Motor neuron (in vitro differentiated cells): ENCODE measurements at regions of chr9 and their contacts with region 1.

Region 1: GRCh38 chr9:15211160-15211814 is 95.7 kb downstream of the TTC39B start:
- ATAC-seq: peak in 6 of 8 experiments; percentile 37 to 76 (median 62)
- H3K4me3 ChIP-seq: no peak overlapping the region
- H3K27ac ChIP-seq: no peak overlapping the region
- H3K4me1 ChIP-seq: peaks cover 13 to 17% of the 10 kb centered on the region in 2 donors

Region 2: GRCh38 chr9:15328946-15329345 is 117.7 kb after region 1 on chr9:
- in situ Hi-C with region 1: no loop called
- ATAC-seq: no peak
- H3K4me3 ChIP-seq: no peak overlapping the region
- H3K27ac ChIP-seq: no peak overlapping the region
- H3K4me1 ChIP-seq: no peaks in the 10 kb centered on the region

Region 3: DNA sequence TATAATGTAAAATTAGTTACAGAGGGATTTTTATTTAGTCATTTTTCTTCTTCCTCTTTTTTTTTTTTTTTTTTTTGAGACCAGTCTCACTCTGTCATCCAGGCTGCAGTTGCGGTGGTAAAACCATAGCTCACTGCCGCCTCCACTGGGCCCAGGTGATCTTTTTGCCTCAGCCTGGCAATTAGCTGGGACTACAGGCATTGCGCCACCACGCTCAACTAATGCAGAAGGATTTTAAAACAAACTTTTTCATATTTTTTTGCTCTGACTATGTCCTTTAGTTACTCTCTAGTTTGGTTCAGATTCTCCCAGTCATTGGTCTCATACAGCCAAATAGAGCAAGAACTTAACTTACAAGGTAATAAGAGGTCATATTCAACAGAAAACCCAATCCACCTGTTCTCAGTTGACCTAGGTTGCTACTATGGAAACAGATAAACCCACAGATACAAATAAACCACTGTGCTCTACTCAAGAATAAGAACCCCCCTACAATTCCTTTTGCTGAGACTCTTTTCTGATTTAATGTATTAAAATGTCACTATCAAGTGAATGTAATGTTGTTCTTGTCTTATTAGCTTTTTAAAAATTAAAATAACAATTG is 145.9 kb after region 1 on chr9:
- in situ Hi-C with region 1: no loop called
- ATAC-seq: no peak
- H3K4me3 ChIP-seq: no peak overlapping the region
- H3K27ac ChIP-seq: no peak overlapping the region
- H3K4me1 ChIP-seq: peaks cover 0 to 5% of the 10 kb centered on the region in 2 donors

Region 4: GRCh38 chr9:15606643-15607472 is 395.6 kb after region 1 on chr9:
- in situ Hi-C with region 1: loop called in 2 of 9 experiments (anchors 25 kb)
- ATAC-seq: no peak
- H3K4me3 ChIP-seq: no peak overlapping the region
- H3K27ac ChIP-seq: no peak overlapping the region
- H3K4me1 ChIP-seq: no peaks in the 10 kb centered on the region